Head of caudate nucleus (tissue), 42 donors: ENCODE measurements at regions of chr11 and their contacts with region 1.

Region 1: GRCh38 chr11:108222686-108223448 is at the start of gene ATM:
- DNase-seq: peak; percentile 96 to 99 (median 99)

Region 2: DNA sequence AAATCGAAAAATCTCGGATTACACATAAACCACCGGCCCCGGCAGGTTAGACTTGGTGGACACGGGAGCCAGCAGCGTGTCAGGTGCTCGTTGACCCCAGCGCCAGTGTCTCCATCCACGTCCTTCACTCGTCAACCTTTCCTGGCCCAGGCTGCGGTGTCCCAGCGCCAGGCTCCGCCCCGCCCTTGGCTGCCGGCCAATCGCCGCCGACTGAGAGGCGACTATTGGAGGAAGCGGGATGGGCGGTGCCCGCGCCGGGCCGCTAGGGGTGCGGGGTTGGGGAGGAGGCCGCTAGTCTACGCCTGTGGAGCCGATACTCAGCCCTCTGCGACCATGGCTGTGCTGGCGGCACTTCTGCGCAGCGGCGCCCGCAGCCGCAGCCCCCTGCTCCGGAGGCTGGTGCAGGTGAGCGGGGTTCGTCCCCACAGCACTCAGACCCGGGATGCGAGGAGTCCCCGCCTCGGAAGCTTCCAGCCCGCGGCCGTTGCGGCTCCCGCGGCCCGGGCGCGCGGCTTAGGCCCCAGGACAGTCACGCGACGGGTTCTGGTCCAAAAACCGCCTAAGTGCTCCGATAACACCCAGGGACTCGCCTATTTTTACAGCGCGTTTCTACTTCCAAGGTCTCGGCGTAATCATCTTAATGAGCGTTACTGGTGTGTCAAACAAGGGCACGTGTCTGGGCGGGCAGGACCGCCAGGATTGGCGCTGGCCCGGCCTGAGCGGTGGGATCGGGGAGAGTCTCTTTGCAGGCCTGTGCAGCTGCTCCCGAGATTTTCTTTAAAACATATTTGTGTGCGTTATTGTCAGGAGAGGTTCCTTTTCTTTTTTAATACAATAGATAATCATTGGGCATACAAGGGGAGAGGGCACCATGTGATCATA is 101.4 kb before region 1 on chr11 and contains the start of gene ACAT1:
- intact Hi-C with region 1: loop called (anchors 10 kb)
- DNase-seq: peak; percentile 90 to 99 (median 97)

Region 3: GRCh38 chr11:108467091-108467823 is 244.4 kb after region 1 on chr11 and contains the start of gene C11orf65:
- intact Hi-C with region 1: loop called (anchors 10 kb)
- DNase-seq: peak; percentile 94 to 99 (median 98)

Region 4: DNA sequence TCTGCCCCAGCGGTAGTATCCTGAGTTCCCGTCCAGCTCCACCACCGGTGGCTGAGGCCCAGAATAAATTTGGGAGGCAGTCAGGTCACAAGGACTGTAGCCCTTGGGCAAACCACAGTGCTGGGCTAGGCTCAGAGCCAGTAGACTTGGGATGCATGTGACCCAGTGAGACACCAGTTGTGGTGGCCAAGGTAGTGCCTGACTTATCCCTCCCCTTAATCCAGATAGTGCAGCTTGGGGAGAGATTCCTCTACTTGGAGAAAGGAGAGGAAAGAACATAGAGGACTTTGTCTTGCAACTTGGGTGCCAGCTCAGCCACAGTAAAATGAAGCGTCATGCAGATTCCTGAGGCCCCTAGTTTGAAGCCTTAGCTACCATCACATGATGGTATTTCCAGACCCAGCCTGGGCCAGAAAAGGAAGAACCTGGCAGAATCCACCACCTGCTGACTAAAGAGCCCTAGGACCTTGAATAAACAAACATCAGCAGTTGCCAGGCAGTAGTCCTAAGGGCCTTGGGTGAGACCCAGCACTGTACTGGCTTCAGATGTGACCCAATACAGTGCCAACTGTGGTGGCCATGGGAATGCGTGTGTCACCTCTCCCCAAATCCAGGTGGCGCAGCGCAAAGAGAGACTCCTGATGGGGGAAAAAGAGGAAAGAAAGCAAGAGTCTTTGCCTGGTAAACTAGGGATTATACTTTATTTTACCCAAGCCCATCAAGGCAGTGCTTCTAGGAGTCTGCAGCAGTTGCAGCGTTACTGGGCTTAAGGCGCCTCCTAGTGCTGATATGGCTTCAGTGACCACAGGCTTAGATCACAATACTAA is 425.0 kb after region 1 on chr11:
- intact Hi-C with region 1: loop called (anchors 5 kb)
- DNase-seq: peak; percentile 31 to 85 (median 69)

Region 5: DNA sequence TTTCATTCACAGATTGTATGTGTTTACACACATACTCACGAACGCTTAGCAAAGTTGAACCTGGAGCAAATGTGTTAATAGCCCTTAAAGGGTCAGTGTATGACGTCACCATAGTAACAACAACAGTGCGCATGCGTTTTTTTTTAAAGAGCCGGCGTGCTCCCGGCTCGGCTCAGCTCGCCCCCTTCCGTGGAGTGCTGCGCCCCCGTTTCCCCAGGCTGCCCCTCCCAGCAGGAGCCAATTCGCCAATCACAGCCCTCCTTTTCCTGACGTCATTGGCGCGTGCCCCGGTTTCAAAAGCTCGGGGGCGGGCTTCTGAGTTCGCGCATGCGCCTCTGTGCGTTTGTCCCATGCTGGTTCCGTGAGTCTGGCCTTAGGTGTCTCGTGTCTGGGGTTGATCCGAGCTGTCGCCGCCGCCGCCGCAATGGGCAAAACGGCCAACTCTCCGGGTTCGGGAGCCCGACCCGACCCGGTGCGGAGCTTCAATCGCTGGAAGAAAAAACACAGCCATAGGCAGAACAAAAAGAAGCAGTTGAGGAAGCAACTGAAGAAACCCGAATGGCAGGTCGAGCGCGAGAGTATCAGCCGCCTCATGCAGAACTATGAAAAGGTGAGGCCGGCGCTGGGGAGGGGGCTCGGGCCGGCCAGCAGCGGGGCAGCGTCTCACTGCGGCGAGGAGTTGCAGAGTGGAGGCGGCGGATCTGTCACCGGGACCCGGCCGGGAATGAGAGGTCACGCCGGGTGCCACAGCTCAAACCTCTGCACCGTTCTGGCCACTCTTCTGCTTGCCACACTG is 442.1 kb after region 1 on chr11 and contains the start of gene DDX10:
- intact Hi-C with region 1: loop called (anchors 5 kb)
- DNase-seq: peak; percentile 96 to 99 (median 98)